Posterior vena cava (tissue), 2 donors: ENCODE measurements at regions of chr17 and their contacts with region 1.

Region 1: DNA sequence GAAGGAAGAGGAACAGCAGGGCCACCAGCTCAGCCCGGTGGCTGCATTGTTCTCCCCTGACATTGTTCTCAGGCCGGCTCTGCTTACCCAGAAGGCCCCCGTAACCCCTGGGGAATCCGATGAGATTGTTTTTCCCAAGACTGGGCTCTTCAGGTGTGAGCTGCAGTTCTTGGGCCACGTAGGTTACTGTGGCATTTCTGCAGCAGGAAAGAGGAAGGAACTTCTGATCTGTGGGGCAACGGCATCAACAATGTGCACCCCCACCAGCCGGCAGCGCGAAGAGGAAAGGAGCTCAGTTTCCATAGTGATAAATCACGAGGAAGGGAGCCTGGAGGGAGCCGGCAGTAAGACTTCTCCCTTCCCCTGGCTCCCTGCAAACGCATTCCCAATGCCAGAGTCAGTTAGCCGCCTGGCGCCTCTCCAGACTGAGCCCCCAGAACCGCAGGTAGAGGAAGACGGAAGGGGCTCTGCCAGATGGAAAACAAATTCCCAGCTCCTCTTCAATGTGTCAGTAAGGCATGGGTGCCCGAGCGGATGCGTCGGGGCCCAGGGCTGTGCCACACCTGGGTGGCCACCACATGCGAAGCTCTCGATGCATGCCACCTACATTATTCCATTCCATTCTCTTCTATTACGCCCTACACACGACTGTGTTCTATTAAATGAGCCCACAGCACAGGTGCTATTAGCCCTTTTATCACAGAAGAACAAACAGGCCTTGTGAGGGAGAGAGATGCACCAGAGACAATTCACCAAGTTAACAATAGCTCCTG is 21.5 kb upstream of the PECAM1 start:
- DNase-seq: peak; percentile 90

Region 2: GRCh38 chr17:64320613-64321553 is 91.3 kb before region 1 on chr17:
- intact Hi-C with region 1: loop called in 1 of 2 experiments (anchors 5 kb)
- DNase-seq: no peak